Esophagus muscularis mucosa (tissue), 4 donors: ENCODE measurements at regions of chr10 and their contacts with region 1.

Region 1: DNA sequence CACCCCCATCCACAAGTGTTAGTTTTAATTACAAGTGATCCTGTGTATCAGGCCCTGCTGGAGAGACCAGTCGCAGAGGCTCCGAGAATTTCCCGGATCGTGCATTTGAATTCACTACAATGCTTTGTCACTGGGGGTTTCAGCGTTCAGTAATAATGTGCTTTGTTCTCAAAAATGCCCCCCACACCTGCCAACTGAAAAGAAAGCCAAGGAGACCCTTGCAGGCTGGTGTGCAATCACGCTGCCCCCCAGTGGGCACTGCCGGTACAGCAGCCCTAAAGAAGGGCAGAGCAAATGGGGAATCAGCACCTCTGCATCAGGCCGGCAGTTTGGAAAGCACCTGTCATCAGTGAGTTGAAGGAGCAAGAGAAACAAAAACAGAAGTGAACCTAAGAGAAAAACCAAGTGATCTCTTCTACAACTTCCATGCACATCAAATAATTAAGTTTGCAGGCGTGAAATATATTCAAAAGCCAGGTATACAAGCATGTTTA is 177.6 kb downstream of the PARD3 start:
- DNase-seq: no peak
- H3K4me3 ChIP-seq: no peak overlapping the region
- H3K27ac ChIP-seq: no peak overlapping the region
- H3K4me1 ChIP-seq: peaks cover 13 to 65% (median 29%) of the 10 kb centered on the region in 4 donors
- H3K27me3 ChIP-seq: no peaks in the 10 kb centered on the region
- CTCF ChIP-seq: peak; percentile 86 to 97 (median 94)
- EP300 ChIP-seq: no peak
- POLR2A ChIP-seq: no peak

Region 2: DNA sequence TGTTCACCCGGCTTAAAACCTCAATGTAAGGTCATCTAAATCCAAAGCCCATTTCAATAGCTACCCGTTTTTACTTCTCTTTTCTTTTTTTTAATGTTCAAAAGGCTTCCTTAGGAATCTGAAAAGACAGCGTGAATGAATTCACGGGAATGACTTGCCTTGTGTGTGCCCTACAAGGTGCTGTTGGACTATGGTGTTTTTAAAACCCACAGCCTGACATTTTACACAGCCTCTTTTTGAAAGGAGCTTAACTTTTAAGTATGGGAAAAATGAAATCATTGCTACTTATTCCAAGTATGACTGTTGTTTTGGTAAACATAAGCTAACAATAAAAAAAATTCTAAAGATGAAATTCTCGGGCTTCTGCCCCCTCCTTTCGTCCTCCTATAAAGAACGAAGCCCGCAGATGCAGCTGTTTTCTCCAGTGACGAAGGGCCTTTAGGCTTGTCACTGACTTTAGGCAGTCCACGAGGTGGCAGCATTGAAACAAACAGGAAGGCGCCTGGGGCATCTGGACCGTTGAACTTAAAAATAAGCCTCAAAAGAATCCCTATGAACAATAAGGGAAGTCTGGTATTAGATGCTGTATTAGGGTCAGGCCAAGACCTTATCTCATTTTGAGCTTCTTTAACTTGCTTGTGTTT is 1444.3 kb before region 1 on chr10:
- intact Hi-C with region 1: loop called (anchors 5 kb)
- DNase-seq: no peak
- H3K4me3 ChIP-seq: no peak overlapping the region
- H3K27ac ChIP-seq: peak overlapping the region; percentile 4 to 53 (median 22)
- H3K4me1 ChIP-seq: peaks cover 20 to 42% (median 40%) of the 10 kb centered on the region in 4 donors
- H3K27me3 ChIP-seq: no peaks in the 10 kb centered on the region
- CTCF ChIP-seq: peak; percentile 81 to 86 (median 81)
- EP300 ChIP-seq: no peak
- POLR2A ChIP-seq: no peak

Region 3: DNA sequence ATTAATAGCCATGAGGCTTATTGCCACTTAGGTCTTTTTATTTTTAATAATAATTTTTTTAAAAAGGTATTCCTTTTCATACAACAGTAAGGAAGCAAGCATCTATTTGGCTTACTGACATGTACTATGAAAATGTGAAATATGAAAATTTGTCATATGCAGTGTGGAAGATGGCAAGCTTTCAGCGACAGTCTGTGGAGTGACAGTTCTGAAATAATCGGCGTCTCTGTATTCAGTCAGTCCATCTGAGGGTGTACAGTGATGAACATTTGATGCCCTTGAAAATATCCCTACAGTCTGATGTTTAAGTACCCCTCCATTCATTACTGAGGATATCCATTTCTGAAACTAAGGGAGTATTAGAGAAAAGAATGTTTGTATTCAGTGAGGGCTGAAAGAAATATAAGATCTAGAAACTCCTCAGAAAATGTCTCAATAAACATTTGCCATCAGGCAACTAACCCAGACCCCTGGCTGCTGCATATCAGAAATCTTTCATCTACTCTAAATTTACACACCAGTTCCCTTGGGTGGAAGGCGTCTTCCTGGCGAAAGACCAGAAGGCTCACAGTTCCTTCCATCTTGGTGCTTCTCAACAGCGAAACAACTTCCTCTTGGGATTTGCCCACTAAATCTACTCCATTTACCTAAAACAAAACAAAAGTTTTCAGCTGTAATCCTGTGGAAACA is 263.0 kb before region 1 on chr10:
- intact Hi-C with region 1: loop called (anchors 10 kb)
- DNase-seq: no peak
- H3K4me3 ChIP-seq: no peak overlapping the region
- H3K27ac ChIP-seq: no peak overlapping the region
- H3K4me1 ChIP-seq: peaks cover 0 to 7% (median 3%) of the 10 kb centered on the region in 4 donors
- H3K27me3 ChIP-seq: no peaks in the 10 kb centered on the region
- CTCF ChIP-seq: no peak
- EP300 ChIP-seq: no peak
- POLR2A ChIP-seq: no peak